ENCODE measurements at regions of chr12 and their contacts with region 1.

Region 1: GRCh38 chr12:113348849-113349536 is 9.4 kb upstream of the PLBD2 start:
- DNase-seq: no peak

Region 2: DNA sequence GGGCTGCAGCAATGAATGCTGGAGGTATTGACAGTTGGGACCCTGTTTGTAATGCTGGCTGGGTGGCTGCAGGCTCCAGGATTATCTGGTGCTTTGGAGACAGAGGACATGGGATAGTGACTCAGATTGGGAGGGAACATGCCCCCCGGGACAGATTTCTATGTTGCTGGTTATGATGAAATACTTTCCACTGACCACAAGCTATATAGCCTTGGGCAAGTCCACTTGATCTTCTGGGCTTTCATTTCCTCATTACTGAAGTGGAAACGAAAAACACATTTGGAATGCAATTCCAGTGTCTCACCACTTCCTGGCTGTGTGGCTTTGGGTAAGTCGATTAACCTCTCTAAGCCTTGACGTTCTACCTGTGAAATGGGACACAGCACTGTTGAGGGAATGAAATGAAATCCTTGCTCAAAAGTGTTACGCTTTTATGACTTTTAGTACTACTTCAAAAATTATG is 134.0 kb before region 1 on chr12:
- intact Hi-C with region 1: loop called (anchors 5 kb)
- DNase-seq: no peak